Ascending aorta (tissue), 2 donors: ENCODE measurements at regions of chr14 and their contacts with region 1.

Region 1: DNA sequence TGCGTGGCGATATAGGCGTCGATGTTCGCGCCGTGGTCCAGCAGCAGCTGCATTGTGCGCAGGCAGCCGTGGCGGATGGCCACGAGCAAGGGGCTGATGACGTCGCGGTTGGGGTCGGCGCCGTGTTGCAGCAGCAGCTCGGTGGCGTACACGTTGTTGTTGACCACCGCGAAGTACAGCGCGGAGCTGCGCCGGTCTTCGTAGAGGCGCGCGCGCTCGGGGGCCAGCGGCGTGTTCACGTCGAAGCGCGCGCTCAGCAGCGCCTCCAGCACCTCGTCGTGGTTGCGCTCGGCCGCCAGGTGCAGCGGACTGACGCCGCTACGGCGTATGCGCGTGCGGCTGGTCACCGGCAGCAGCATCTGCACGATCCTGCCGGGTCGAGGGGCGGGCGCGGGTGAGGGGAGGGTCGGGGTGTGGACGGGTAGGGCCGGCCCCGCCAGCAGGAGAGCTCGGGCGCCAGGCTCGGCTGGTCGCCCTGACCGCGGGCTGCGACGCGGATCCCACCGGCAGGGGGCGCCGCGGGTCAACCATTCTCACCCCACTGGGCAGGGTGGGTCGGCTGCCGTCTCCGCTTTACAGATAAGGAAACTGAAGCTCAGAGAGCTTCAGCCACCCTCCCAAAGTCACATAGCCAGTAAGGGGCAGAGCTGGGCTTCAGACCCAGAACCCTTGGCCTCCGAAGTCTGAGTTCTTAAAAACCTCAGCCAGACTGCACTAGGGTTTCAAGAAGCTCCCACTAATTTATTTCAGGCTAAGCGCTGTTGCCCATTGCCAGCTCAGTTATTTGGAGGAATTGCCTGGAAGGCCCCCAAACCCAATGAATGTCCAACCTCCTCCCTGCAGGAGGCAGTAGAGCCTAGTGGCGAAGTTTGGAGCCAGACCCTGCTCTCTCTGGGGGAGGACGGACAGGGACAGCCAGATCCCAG is 12.4 kb downstream of the FAM181A start:
- DNase-seq: peak in 1 of 2 donors; percentile 91
- H3K4me3 ChIP-seq: peak overlapping the region; percentile 31 to 38
- H3K27ac ChIP-seq: peak overlapping the region; percentile 78 to 82
- H3K4me1 ChIP-seq: peaks cover 0 to 19% of the 10 kb centered on the region in 2 donors
- H3K27me3 ChIP-seq: no peaks in the 10 kb centered on the region
- CTCF ChIP-seq: peak; percentile 71 to 92 (median 85)

Region 2: GRCh38 chr14:93464271-93464670 is 475.3 kb before region 1 on chr14:
- intact Hi-C with region 1: no loop called
- DNase-seq: no peak
- H3K4me3 ChIP-seq: no peak overlapping the region
- H3K27ac ChIP-seq: no peak overlapping the region
- H3K4me1 ChIP-seq: no peaks in the 10 kb centered on the region
- H3K27me3 ChIP-seq: no peaks in the 10 kb centered on the region
- CTCF ChIP-seq: no peak

Region 3: GRCh38 chr14:93959239-93960107 is 19.9 kb after region 1 on chr14:
- intact Hi-C with region 1: loop called (anchors 2 kb)
- DNase-seq: peak; percentile 75 to 90
- H3K4me3 ChIP-seq: no peak overlapping the region
- H3K27ac ChIP-seq: peak overlapping the region; percentile 71 to 80
- H3K4me1 ChIP-seq: peaks cover 6 to 51% of the 10 kb centered on the region in 2 donors
- H3K27me3 ChIP-seq: no peaks in the 10 kb centered on the region
- CTCF ChIP-seq: no peak

Region 4: GRCh38 chr14:93970549-93970946 is 31.0 kb after region 1 on chr14:
- intact Hi-C with region 1: loop called (anchors 2 kb)
- DNase-seq: no peak
- H3K4me3 ChIP-seq: peak overlapping the region; percentile 43 to 68
- H3K27ac ChIP-seq: peak overlapping the region; percentile 95
- H3K4me1 ChIP-seq: peaks cover 11 to 69% of the 10 kb centered on the region in 2 donors
- H3K27me3 ChIP-seq: no peaks in the 10 kb centered on the region
- CTCF ChIP-seq: peak in 2 of 3 experiments; percentile 27 to 33

Region 5: DNA sequence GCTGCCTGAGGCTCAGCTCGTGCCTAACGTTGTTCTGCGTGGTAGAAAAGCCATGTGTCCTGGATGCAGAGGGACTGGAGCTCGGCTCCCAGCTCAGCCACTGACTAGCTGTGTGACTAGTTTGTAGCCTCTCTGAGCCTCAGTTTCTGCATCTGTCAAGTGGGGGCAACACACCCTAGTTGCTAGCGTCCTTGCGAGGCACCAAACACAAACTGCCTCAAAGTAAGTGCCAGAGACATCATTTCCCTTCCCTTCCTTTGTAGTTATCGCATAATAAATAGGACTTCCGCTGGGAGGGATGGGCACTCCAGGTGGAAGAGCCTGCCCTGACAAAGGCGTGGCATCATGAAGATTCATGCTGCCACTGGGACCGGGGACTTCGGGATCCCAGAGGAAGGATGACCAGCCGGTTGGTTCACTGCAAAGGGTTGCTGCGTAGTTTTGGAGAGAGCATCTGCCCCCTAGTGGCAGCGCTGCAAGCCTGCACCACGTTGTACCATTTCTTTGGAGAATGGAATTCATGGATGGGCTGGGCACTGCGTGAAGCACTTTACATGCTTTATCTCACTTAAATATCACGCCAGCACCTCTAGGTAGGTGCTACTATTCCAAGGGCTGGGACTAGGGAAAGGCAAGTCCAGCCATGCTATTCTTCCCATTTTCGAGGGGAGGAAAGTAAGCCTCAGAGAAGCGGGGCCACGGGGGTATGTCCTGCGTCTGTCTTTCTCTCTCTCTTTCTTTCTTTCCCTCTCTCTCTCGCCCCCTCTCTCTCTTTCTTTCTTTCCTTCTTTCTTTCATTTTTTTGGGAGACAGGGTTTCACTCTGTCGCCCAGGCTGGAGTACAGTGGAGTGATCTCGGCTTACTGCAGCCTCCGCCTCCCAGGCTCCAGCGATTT is 62.2 kb after region 1 on chr14:
- intact Hi-C with region 1: loop called (anchors 1 kb)
- DNase-seq: no peak
- H3K4me3 ChIP-seq: no peak overlapping the region
- H3K27ac ChIP-seq: no peak overlapping the region
- H3K4me1 ChIP-seq: peaks cover 0 to 9% of the 10 kb centered on the region in 2 donors
- H3K27me3 ChIP-seq: no peaks in the 10 kb centered on the region
- CTCF ChIP-seq: peak; percentile 93 to 96 (median 96)

Region 6: GRCh38 chr14:94080471-94081289 is 141.1 kb after region 1 on chr14 and contains the start of gene DDX24:
- intact Hi-C with region 1: loop called (anchors 2 kb)
- DNase-seq: peak; percentile 83 to 98
- H3K4me3 ChIP-seq: peak within 1 kb of the TSS; percentile 72 to 98
- H3K27ac ChIP-seq: peak within 1 kb of the TSS; percentile 90 to 98
- H3K4me1 ChIP-seq: peaks cover 6 to 30% of the 10 kb centered on the region in 2 donors
- H3K27me3 ChIP-seq: no peaks in the 10 kb centered on the region
- CTCF ChIP-seq: no peak
- total RNA-seq, gene DDX24: 104 TPM

Region 7: GRCh38 chr14:94093418-94093817 is 153.9 kb after region 1 on chr14:
- intact Hi-C with region 1: no loop called
- DNase-seq: no peak
- H3K4me3 ChIP-seq: no peak overlapping the region
- H3K27ac ChIP-seq: no peak overlapping the region
- H3K4me1 ChIP-seq: no peaks in the 10 kb centered on the region
- H3K27me3 ChIP-seq: no peaks in the 10 kb centered on the region
- CTCF ChIP-seq: no peak

Region 8: GRCh38 chr14:94136575-94137331 is 197.2 kb after region 1 on chr14:
- intact Hi-C with region 1: loop called (anchors 5 kb)
- DNase-seq: peak; percentile 49 to 93
- H3K4me3 ChIP-seq: no peak overlapping the region
- H3K27ac ChIP-seq: no peak overlapping the region
- H3K4me1 ChIP-seq: no peaks in the 10 kb centered on the region
- H3K27me3 ChIP-seq: no peaks in the 10 kb centered on the region
- CTCF ChIP-seq: peak; percentile 88 to 96 (median 95)

Region 9: DNA sequence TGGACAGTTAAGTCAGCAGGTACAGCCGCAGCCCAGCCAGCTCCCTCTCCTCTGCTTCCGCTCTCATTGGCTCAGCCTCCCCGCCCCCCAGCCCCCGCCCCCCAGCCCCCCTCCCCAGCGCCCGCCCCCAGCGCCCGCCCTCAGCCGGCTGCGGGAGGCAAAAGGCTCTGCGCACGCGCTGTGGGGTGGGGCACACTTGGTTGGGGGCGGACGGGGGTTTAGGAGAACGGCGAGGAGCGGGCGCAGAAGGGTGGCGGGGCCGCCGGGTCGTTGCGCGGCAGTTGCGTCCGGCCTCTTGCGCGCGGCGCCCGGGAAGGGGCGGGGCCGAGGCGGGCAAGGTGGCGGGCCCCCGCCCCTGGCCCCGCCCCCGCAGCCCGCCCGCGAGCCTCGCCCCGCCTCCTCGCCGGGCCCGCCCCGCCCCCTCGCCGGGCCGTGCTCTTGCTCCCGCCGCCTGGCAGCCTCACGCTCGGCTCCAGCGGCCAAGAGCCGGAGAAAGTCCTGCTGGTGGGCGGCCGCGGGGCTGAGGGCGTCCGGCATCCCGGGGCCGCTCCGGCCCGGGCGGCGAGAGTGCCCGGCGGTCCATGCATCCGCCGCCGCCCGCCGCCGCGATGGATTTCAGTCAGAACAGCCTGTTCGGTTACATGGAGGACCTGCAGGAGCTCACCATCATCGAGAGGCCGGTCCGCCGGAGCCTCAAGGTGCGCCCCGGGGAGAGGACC is 234.5 kb after region 1 on chr14 and contains the start of gene PPP4R4:
- intact Hi-C with region 1: loop called (anchors 5 kb)
- DNase-seq: peak; percentile 63 to 92
- H3K4me3 ChIP-seq: peak within 1 kb of the TSS; percentile 75 to 84
- H3K27ac ChIP-seq: peak within 1 kb of the TSS; percentile 50 to 61
- H3K4me1 ChIP-seq: peaks cover 3 to 14% of the 10 kb centered on the region in 2 donors
- H3K27me3 ChIP-seq: no peaks in the 10 kb centered on the region
- CTCF ChIP-seq: no peak
- total RNA-seq, gene PPP4R4: not detected